Left ventricle myocardium superior (tissue), 1 donor: ENCODE measurements at regions of chr6 and their contacts with region 1.

Region 1: GRCh38 chr6:127539272-127539671 is 20.1 kb upstream of the MTCL3 start:
- DNase-seq: no peak
- ATAC-seq: no peak

Region 2: DNA sequence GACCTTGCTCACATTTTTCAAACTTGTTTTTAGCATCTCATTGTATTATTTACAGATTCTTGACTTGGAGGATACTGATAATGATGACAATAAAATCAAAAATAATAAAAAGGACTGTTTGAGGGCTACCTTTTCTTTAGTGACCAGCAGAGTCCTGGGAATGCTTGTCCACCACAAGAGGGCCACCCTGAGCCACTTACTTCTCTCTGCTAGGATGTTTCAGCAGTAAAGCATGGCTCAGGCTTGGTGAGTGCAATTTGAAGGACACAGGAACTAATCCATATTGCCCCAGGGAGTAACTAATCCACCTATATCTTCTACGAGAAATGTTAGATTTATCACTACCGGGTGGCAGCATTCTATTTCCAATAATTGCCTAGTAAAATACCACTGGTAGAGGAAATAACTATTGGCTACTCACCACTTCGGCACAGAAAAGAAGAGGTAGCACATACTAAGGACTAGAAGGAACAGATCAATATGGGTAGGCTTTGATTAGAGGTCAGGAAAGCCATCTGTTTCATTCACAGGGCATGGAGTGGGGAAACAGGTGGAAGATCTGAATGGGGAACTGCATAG is 74.3 kb before region 1 on chr6:
- intact Hi-C with region 1: loop called (anchors 10 kb)
- DNase-seq: peak; percentile 44
- ATAC-seq: peak; percentile 93